Activated B cell treated with CpG ODN at 0.5 μM for 24 hours (primary cell): ENCODE measurements at regions of chr17 and their contacts with region 1.

Region 1: GRCh38 chr17:67431249-67432048 is 54.4 kb downstream of the PITPNC1 start:
- DNase-seq: no peak
- ATAC-seq: no peak
- H3K4me3 Mint-ChIP-seq: no peak overlapping the region
- H3K27ac Mint-ChIP-seq: no peak overlapping the region
- H3K4me1 Mint-ChIP-seq: peaks cover 4% of the 10 kb centered on the region
- H3K27me3 Mint-ChIP-seq: no peaks in the 10 kb centered on the region
- CTCF ChIP-seq: no peak

Region 2: DNA sequence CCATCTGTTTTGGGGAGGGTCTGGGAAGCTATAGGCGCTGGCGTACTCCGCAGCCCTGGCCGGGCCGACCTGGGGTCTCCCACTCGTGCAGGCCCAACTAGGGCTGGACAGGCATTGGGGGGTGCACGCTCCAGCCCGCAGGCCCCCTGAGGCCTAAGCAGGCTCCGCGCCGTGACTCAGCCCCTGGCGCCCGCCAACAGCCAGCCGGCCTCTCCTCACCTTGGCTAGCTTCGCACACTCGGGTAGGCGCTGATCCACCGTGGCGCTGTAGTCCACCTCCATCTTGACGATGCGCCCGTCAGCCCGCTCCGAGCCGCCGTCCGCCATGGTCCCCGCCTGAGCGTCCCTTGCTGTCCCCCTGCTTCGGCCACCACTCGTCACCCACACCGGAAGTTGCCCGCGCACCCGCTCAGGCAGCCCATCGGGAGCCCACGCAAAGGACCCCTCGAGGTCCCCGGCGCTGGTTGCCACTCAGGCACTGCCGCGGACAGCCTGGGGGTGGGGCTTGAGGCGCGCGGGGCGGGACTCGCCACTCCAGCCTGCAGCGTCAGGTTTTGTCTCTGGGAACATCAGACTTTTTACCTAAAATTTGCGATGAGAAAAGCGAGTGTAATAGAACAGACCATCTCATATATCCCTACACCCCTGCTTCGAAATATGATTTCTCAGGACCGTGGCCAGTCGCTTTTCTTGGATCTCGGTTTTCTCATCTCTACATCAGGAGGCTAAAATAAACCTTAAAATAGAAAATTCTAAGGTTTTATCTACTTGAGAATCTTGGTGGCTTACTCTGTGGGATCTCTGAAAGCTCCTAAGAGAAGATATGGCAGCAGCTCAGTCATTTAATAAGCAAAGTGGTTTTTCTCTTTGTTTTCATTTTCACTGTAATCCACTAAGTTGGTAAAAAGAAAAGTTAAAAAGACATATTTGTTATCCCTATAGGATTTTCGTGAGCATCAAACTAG is 65.0 kb before region 1 on chr17 and contains the start of gene PSMD12:
- CTCF ChIA-PET with region 1: no interaction called
- POLR2A ChIA-PET with region 1: no interaction called
- intact Hi-C with region 1: no loop called
- DNase-seq: peak; percentile 94
- ATAC-seq: peak; percentile 98
- H3K4me3 Mint-ChIP-seq: peak within 1 kb of the TSS; percentile 91
- H3K27ac Mint-ChIP-seq: peak within 1 kb of the TSS; percentile 87
- H3K4me1 Mint-ChIP-seq: peaks cover 40% of the 10 kb centered on the region
- H3K27me3 Mint-ChIP-seq: no peaks in the 10 kb centered on the region
- CTCF ChIP-seq: no peak
- total RNA-seq, gene PSMD12: 47.3 and 54.6 TPM in 2 replicates

Region 3: GRCh38 chr17:67410286-67410685 is 21.2 kb before region 1 on chr17:
- CTCF ChIA-PET with region 1: no interaction called
- POLR2A ChIA-PET with region 1: interaction called, 4 read pairs
- intact Hi-C with region 1: loop called (anchors 1 kb)
- DNase-seq: no peak
- ATAC-seq: no peak
- H3K4me3 Mint-ChIP-seq: no peak overlapping the region
- H3K27ac Mint-ChIP-seq: no peak overlapping the region
- H3K4me1 Mint-ChIP-seq: no peaks in the 10 kb centered on the region
- H3K27me3 Mint-ChIP-seq: no peaks in the 10 kb centered on the region
- CTCF ChIP-seq: no peak

Region 4: GRCh38 chr17:67546578-67547527 is 115.4 kb after region 1 on chr17:
- CTCF ChIA-PET with region 1: no interaction called
- POLR2A ChIA-PET with region 1: no interaction called
- intact Hi-C with region 1: no loop called
- DNase-seq: no peak
- ATAC-seq: peak; percentile 69
- H3K4me3 Mint-ChIP-seq: no peak overlapping the region
- H3K27ac Mint-ChIP-seq: no peak overlapping the region
- H3K4me1 Mint-ChIP-seq: peaks cover 13% of the 10 kb centered on the region
- H3K27me3 Mint-ChIP-seq: no peaks in the 10 kb centered on the region
- CTCF ChIP-seq: no peak

Region 5: GRCh38 chr17:67671492-67671891 is 240.0 kb after region 1 on chr17:
- CTCF ChIA-PET with region 1: no interaction called
- POLR2A ChIA-PET with region 1: no interaction called
- intact Hi-C with region 1: no loop called
- DNase-seq: no peak
- ATAC-seq: no peak
- H3K4me3 Mint-ChIP-seq: no peak overlapping the region
- H3K27ac Mint-ChIP-seq: no peak overlapping the region
- H3K4me1 Mint-ChIP-seq: peaks cover 2% of the 10 kb centered on the region
- H3K27me3 Mint-ChIP-seq: no peaks in the 10 kb centered on the region
- CTCF ChIP-seq: no peak